ENCODE measurements at regions of chr22 and their contacts with region 1.

Region 1: DNA sequence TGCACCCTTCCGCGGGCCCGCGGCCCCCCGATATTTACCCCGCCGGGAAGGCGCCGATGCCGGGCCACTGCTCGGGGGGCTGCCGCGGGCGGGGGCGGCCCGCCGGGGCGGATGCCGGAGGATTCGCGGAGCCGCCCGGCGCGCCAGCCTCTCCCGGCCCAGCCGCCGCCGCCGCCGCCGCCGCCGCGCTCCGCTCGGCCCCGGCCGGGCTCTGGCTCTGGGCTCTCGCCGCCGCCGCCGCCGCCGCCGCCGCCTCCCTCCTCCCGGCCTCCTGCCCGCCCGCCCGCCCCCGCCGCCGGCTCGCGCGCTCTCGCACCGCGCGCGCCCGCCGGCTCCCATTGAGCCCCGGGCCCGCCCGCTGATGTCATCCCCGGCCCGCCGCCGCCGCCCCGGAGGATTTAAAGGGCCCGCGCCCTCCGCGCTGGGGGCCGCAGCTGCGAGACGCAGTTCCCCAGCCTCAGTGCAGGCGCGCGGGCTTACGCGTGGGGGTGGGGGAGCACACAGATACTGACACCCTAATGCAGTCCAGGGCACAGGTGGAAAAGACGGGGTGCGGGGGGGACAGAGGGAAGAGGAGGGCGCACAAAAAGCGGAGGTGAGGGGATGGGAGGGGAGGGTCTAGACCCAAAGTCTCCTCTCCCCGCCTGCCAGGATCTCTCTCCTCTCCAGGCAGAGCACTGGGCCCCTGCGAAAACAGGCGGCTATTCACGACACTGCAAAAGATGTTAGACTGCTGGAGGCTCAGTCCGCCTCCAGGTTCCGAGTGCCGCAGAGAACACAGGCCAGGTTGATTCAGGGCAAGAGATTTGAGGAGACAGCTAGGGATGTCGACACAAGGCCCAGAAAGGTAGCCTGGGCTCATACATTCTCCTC is at the start of gene CSNK1E:
- DNase-seq: peak; percentile 74 to 83
- ATAC-seq: peak; percentile 64 to 80 (median 70)
- H3K4me3 ChIP-seq: peak within 1 kb of the TSS; percentile 51
- H3K4me3 Mint-ChIP-seq: peak within 1 kb of the TSS; percentile 90
- H3K27ac ChIP-seq: peak within 1 kb of the TSS; percentile 89
- H3K27ac Mint-ChIP-seq: peak within 1 kb of the TSS; percentile 88 to 95
- H3K4me1 ChIP-seq: peaks cover 51% of the 10 kb centered on the region
- H3K4me1 Mint-ChIP-seq: peaks cover 39 to 51% of the 10 kb centered on the region in 2 donors
- H3K27me3 ChIP-seq: no peaks in the 10 kb centered on the region
- H3K27me3 Mint-ChIP-seq: no peaks in the 10 kb centered on the region
- CTCF ChIP-seq: no peak
- total RNA-seq, gene CSNK1E: 126 to 178 (median 149) TPM

Region 2: DNA sequence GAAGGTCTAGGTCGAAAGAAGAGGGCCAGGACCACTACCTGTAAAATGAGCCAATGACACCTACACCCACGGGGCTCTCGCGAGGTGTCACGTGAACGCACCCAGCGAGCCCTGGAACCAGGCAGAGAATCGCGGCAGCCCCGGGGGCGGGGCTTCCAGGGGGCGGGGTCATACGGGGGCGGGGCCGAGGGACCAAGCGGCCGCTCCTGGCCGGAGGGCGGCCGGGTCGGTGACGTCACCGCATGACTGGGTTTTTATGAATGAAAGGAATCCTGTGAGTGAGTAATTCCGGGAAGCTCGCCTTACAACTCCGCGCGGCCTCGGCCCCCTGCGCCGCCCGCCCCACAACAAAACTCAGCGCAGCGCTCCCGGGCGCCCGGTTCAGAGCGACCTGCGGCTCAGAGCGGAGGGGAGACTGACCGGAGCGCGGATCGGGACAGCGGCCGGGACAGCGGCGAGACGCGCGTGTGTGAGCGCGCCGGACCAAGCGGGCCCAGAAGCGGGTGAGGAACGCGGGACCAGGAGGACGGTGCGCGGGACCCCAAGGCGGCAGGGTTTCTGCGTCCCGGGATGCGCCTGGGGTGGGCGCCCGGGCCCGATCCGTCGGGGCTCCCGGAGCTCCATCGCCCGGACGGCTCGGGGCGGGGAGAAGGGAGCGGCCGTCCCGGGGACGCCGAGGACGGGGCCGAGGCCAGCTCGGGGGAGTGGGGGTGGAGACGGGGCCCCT is 115.5 kb before region 1 on chr22 and contains the start of gene MAFF:
- intact Hi-C with region 1: loop called (anchors 10 kb)
- DNase-seq: peak; percentile 86 to 91
- ATAC-seq: peak; percentile 74 to 88 (median 76)
- H3K4me3 ChIP-seq: peak within 1 kb of the TSS; percentile 57
- H3K4me3 Mint-ChIP-seq: peak within 1 kb of the TSS; percentile 86
- H3K27ac ChIP-seq: peak within 1 kb of the TSS; percentile 99
- H3K27ac Mint-ChIP-seq: peak within 1 kb of the TSS; percentile 90 to 96
- H3K4me1 ChIP-seq: peaks cover 53% of the 10 kb centered on the region
- H3K4me1 Mint-ChIP-seq: peaks cover 38 to 65% of the 10 kb centered on the region in 2 donors
- H3K27me3 ChIP-seq: no peaks in the 10 kb centered on the region
- H3K27me3 Mint-ChIP-seq: no peaks in the 10 kb centered on the region
- CTCF ChIP-seq: no peak
- total RNA-seq, gene MAFF: 168 to 215 (median 187) TPM

Region 3: GRCh38 chr22:38262051-38262795 is 55.1 kb before region 1 on chr22:
- intact Hi-C with region 1: loop called (anchors 2 kb)
- DNase-seq: peak; percentile 36 to 56
- ATAC-seq: peak; percentile 29 to 50 (median 49)
- H3K4me3 ChIP-seq: no peak overlapping the region
- H3K4me3 Mint-ChIP-seq: no peak overlapping the region
- H3K27ac ChIP-seq: no peak overlapping the region
- H3K27ac Mint-ChIP-seq: peak overlapping the region; percentile 76 to 80
- H3K4me1 ChIP-seq: peaks cover 63% of the 10 kb centered on the region
- H3K4me1 Mint-ChIP-seq: peaks cover 58 to 67% of the 10 kb centered on the region in 2 donors
- H3K27me3 ChIP-seq: no peaks in the 10 kb centered on the region
- H3K27me3 Mint-ChIP-seq: no peaks in the 10 kb centered on the region
- CTCF ChIP-seq: peak; percentile 27

Region 4: GRCh38 chr22:38272373-38273134 is 44.8 kb before region 1 on chr22 and contains the start of gene TMEM184B:
- intact Hi-C with region 1: loop called (anchors 2 kb)
- DNase-seq: peak; percentile 86 to 95
- ATAC-seq: peak; percentile 94 to 96 (median 95)
- H3K4me3 ChIP-seq: peak within 1 kb of the TSS; percentile 87
- H3K4me3 Mint-ChIP-seq: peak within 1 kb of the TSS; percentile 90
- H3K27ac ChIP-seq: peak within 1 kb of the TSS; percentile 96
- H3K27ac Mint-ChIP-seq: peak within 1 kb of the TSS; percentile 92 to 96
- H3K4me1 ChIP-seq: peaks cover 57% of the 10 kb centered on the region
- H3K4me1 Mint-ChIP-seq: peaks cover 42 to 58% of the 10 kb centered on the region in 2 donors
- H3K27me3 ChIP-seq: no peaks in the 10 kb centered on the region
- H3K27me3 Mint-ChIP-seq: peaks cover 0 to 3% of the 10 kb centered on the region in 2 donors
- CTCF ChIP-seq: no peak
- total RNA-seq, gene TMEM184B: 58.1 to 72.5 (median 68.6) TPM

Region 5: DNA sequence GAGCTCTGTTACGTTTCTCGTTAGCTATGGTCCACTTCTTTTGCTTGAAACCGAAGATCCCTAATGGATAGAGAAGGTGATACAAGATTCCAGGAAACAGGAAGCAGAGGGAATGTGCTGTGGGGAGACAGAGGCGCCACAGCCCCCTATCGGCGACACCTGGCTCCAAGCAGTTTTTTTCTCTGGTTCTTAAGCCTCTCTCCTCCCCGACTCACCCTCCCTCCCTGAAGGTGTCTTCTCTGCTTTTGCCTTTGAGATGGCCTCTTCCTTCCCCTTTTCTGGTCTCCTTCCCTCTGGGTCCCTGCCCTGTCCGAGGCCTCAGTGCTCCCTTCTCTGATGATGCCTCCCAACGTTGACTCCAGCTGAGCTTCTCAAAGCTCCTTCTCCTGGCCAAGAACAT is 625.8 kb after region 1 on chr22:
- intact Hi-C with region 1: no loop called
- DNase-seq: no peak
- ATAC-seq: peak in 1 of 3 donors; percentile 51
- H3K4me3 ChIP-seq: no peak overlapping the region
- H3K4me3 Mint-ChIP-seq: peak overlapping the region; percentile 73
- H3K27ac ChIP-seq: no peak overlapping the region
- H3K27ac Mint-ChIP-seq: peak overlapping the region in 1 of 2 donors; percentile 37
- H3K4me1 ChIP-seq: peaks cover 26% of the 10 kb centered on the region
- H3K4me1 Mint-ChIP-seq: peaks cover 21 to 25% of the 10 kb centered on the region in 2 donors
- H3K27me3 ChIP-seq: no peaks in the 10 kb centered on the region
- H3K27me3 Mint-ChIP-seq: peaks cover 33 to 76% of the 10 kb centered on the region in 2 donors
- CTCF ChIP-seq: no peak

Measured in natural killer cell (primary cell).